ENCODE measurements at regions of chr10 and their contacts with region 1.

Region 1: GRCh38 chr10:109866168-109866994 is 56.9 kb downstream of the XPNPEP1 start:
- DNase-seq: no peak
- ATAC-seq: no peak
- H3K4me3 ChIP-seq: no peak overlapping the region
- H3K4me3 Mint-ChIP-seq: no peak overlapping the region
- H3K27ac ChIP-seq: no peak overlapping the region
- H3K27ac Mint-ChIP-seq: no peak overlapping the region
- H3K4me1 ChIP-seq: no peaks in the 10 kb centered on the region
- H3K4me1 Mint-ChIP-seq: no peaks in the 10 kb centered on the region
- H3K27me3 ChIP-seq: no peaks in the 10 kb centered on the region
- H3K27me3 Mint-ChIP-seq: no peaks in the 10 kb centered on the region
- CTCF ChIP-seq: no peak

Region 2: DNA sequence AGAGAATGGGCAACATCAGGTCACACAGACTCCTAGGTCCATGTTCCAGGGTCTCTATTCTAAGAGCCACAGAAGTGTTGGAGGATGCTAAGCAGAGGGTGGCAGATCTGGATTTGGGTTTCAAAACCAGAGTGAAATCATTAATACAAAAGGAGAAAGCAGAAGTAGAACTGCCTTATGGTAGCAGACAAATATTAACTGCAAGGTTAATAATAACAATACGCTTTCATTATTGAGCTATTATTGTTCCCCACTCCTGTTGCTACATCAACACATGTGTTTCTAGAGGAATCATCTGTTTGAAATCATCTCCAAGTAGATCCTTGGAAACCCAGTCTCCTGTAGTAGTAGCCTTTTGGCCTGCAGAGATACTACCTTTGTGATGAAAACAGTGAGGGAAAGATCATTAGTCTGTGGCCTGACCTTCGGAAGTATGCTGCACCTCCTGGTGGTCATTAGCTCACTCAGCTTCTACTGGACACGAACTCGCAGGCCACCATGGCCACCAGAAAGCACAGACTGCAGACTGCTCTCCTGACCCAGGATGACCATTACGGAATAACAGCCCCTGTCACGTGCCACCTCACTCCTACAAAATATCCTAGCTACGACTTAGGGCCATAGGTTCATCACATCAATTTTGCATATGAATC is 27.7 kb before region 1 on chr10:
- CTCF ChIA-PET with region 1: no interaction called
- POLR2A ChIA-PET with region 1: no interaction called
- intact Hi-C with region 1: no loop called
- DNase-seq: no peak
- ATAC-seq: no peak
- H3K4me3 ChIP-seq: no peak overlapping the region
- H3K4me3 Mint-ChIP-seq: no peak overlapping the region
- H3K27ac ChIP-seq: no peak overlapping the region
- H3K27ac Mint-ChIP-seq: no peak overlapping the region
- H3K4me1 ChIP-seq: no peaks in the 10 kb centered on the region
- H3K4me1 Mint-ChIP-seq: no peaks in the 10 kb centered on the region
- H3K27me3 ChIP-seq: peaks cover 0 to 2% of the 10 kb centered on the region in 2 experiments
- H3K27me3 Mint-ChIP-seq: peaks cover 24% of the 10 kb centered on the region
- CTCF ChIP-seq: no peak

Region 3: GRCh38 chr10:109852475-109853037 is 13.8 kb before region 1 on chr10:
- CTCF ChIA-PET with region 1: interaction called, 18 read pairs
- POLR2A ChIA-PET with region 1: no interaction called
- intact Hi-C with region 1: no loop called
- DNase-seq: peak; percentile 44 to 81 (median 69)
- ATAC-seq: peak; percentile 68
- H3K4me3 ChIP-seq: no peak overlapping the region
- H3K4me3 Mint-ChIP-seq: peak overlapping the region; percentile 3
- H3K27ac ChIP-seq: no peak overlapping the region
- H3K27ac Mint-ChIP-seq: no peak overlapping the region
- H3K4me1 ChIP-seq: peaks cover 12% of the 10 kb centered on the region
- H3K4me1 Mint-ChIP-seq: peaks cover 20% of the 10 kb centered on the region
- H3K27me3 ChIP-seq: no peaks in the 10 kb centered on the region
- H3K27me3 Mint-ChIP-seq: peaks cover 3% of the 10 kb centered on the region
- CTCF ChIP-seq: peak; percentile 87

Region 4: DNA sequence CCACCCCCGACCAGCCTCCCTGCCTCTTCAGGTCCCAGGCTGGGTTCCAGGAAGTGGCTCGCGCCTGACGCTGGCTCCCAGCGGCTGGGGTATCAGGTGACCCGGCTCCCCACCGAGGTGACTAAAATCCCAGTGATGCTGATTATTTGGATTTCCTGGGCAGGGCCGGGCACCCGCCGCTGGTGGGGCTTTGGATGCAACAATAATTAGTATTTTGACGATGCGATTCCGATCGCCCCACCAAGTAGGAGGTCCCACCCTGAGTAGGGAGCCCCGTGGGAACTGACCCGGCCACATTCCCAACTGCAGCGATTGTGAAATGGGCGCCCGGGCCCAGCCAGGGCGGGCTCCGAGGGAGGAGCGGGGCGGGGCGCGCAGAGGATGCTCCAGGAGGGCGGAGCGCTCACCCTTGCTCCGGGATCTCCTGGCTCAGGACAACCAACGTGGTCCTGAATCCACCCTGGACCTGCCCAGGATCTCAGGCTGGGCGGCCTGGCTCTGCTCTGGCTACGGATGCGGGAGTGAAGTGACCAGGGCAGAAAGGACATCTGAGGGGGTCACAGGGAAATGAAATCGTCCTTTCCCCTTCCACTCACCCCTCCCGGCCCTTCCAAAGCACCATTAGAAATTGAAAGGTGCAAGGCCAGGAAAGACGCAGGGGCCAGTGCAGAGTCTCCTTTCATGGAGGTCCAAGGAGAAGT is 663.9 kb after region 1 on chr10:
- CTCF ChIA-PET with region 1: no interaction called
- POLR2A ChIA-PET with region 1: no interaction called
- intact Hi-C with region 1: no loop called
- DNase-seq: peak in 2 of 9 experiments; percentile 38 to 45
- ATAC-seq: no peak
- H3K4me3 ChIP-seq: no peak overlapping the region
- H3K4me3 Mint-ChIP-seq: peak overlapping the region; percentile 26
- H3K27ac ChIP-seq: no peak overlapping the region
- H3K27ac Mint-ChIP-seq: no peak overlapping the region
- H3K4me1 ChIP-seq: peaks cover 16% of the 10 kb centered on the region
- H3K4me1 Mint-ChIP-seq: peaks cover 24% of the 10 kb centered on the region
- H3K27me3 ChIP-seq: no peaks in the 10 kb centered on the region
- H3K27me3 Mint-ChIP-seq: no peaks in the 10 kb centered on the region
- CTCF ChIP-seq: no peak

Measured in CD8-positive, alpha-beta T cell (primary cell).